Activated CD8-positive, alpha-beta T cell treated with anti-CD3 and anti-CD28 coated beads, Interleukin-2, amount 10 ng/mL, durations not matched to agents 7 days and 5 days (primary cell): ENCODE measurements at regions of chr17 and their contacts with region 1.

Region 1: DNA sequence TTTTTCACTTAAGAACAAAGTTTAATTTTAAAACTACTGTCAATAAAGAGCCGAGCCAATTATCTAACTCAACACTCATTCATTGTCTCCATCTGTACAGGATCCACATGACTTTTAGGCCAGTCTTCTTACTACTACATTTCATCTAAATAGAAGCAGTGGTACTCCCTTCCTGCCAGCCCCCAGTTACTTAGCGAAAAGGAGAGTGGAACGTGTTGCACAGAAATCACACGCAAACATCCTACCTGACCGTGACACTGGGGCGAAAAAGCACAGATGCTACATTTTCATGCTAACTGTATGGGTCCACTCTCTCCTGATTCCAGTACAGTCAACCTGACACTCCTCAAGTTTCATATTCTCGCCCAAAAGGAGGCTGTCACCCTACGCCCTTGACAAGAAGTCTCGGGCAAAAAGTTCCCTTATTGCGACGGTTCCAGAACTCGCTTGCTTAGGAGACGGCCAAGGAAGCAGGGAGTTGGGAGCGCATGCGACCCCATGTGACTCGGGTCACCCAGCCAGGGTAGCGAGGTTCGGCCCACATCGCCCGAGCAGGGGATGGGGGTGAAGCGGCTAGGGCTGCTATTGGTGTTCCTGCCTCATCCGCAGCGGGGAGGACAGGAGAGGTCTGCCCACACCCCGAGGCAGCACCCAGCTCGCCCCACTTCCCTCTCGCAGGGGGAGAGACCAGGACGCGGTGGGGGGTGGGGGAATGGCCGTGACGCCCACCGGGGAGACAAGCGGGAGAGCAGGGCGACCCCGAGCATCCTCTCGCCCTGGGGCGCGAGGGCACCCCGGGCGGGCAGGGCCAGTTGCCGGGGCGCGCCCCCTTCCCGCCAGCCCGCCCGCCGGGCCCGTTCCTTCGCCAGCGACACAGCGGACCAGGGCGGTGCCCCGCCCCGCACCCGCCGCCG is 935 bp downstream of the GNA13 start:
- DNase-seq: peak; percentile 61
- ATAC-seq: peak; percentile 46
- H3K4me3 Mint-ChIP-seq: peak overlapping the region; percentile 93
- H3K27ac Mint-ChIP-seq: peak overlapping the region; percentile 88
- H3K4me1 Mint-ChIP-seq: peaks cover 50% of the 10 kb centered on the region
- H3K27me3 Mint-ChIP-seq: peaks cover 9% of the 10 kb centered on the region

Region 2: DNA sequence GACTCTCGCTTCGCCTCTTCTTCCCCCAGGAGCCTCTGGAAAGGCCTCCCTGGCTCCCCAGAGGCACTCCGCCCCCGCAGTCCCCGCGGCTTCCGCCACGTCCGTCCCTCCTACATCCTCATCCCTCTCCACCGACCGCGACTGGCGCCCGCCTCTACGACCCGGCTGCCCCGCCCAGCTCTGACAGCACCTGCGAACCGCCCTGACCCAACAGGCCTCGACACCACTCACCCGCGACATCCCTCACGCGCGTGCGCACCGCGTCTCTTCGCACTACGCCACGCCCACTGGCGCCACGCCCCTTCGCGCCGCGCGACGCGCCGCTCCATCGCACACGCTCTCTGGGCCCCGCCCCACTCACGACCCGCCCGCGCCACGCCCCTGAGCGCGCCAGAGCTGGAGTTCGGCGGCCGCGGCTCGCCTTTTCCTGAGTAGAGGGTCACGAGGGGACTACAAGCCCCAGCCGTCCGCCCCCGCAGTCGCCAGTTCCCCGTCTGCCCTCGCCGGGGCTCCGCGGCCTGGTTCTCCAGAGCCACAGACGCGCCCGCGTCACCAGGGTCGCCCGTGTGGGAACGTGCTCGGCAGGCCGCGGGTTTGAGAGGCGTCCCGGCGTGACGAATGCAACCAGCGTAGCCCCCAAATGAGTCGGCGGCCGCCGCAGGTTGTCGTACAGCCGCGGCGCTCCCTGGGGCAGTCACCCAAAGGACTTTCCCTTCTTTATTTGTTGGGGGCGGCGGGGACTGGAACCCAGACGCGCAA is 80.1 kb before region 1 on chr17:
- CTCF ChIA-PET with region 1: no interaction called
- POLR2A ChIA-PET with region 1: interaction called, 17 read pairs
- DNase-seq: peak; percentile 97
- ATAC-seq: peak; percentile 90
- H3K4me3 Mint-ChIP-seq: peak overlapping the region; percentile 85
- H3K27ac Mint-ChIP-seq: peak overlapping the region; percentile 98
- H3K4me1 Mint-ChIP-seq: peaks cover 49% of the 10 kb centered on the region
- H3K27me3 Mint-ChIP-seq: no peaks in the 10 kb centered on the region

Region 3: GRCh38 chr17:65039336-65039988 is 16.1 kb before region 1 on chr17:
- CTCF ChIA-PET with region 1: interaction called, 5 read pairs
- POLR2A ChIA-PET with region 1: interaction called, 11 read pairs
- DNase-seq: peak; percentile 71
- ATAC-seq: peak; percentile 88
- H3K4me3 Mint-ChIP-seq: peak overlapping the region; percentile 41
- H3K27ac Mint-ChIP-seq: peak overlapping the region; percentile 83
- H3K4me1 Mint-ChIP-seq: peaks cover 80% of the 10 kb centered on the region
- H3K27me3 Mint-ChIP-seq: no peaks in the 10 kb centered on the region